Activated CD8-positive, alpha-beta T cell treated with anti-CD3 and anti-CD28 coated beads, Interleukin-2, amount 10 ng/mL, durations not matched to agents 7 days and 5 days (primary cell): ENCODE measurements at regions of chr15 and their contacts with region 1.

Region 1: GRCh38 chr15:90954712-90955671 is at the start of gene RCCD1:
- DNase-seq: peak; percentile 95
- ATAC-seq: peak; percentile 94
- H3K4me3 Mint-ChIP-seq: peak within 1 kb of the TSS; percentile 88
- H3K27ac Mint-ChIP-seq: peak within 1 kb of the TSS; percentile 97
- H3K4me1 Mint-ChIP-seq: peaks cover 22% of the 10 kb centered on the region
- H3K27me3 Mint-ChIP-seq: no peaks in the 10 kb centered on the region
- total RNA-seq, gene RCCD1: 30.1 to 31.9 TPM

Region 2: GRCh38 chr15:90915808-90916440 is 39.1 kb before region 1 on chr15:
- CTCF ChIA-PET with region 1: no interaction called
- POLR2A ChIA-PET with region 1: no interaction called
- DNase-seq: no peak
- ATAC-seq: no peak
- H3K4me3 Mint-ChIP-seq: no peak overlapping the region
- H3K27ac Mint-ChIP-seq: no peak overlapping the region
- H3K4me1 Mint-ChIP-seq: no peaks in the 10 kb centered on the region
- H3K27me3 Mint-ChIP-seq: no peaks in the 10 kb centered on the region

Region 3: GRCh38 chr15:90982135-90982534 is 27.1 kb after region 1 on chr15:
- CTCF ChIA-PET with region 1: interaction called, 17 read pairs
- POLR2A ChIA-PET with region 1: interaction called, 4 read pairs
- DNase-seq: no peak
- ATAC-seq: no peak
- H3K4me3 Mint-ChIP-seq: no peak overlapping the region
- H3K27ac Mint-ChIP-seq: peak overlapping the region; percentile 72
- H3K4me1 Mint-ChIP-seq: peaks cover 24% of the 10 kb centered on the region
- H3K27me3 Mint-ChIP-seq: no peaks in the 10 kb centered on the region

Region 4: GRCh38 chr15:91022075-91022835 is 67.3 kb after region 1 on chr15 and contains the start of gene VPS33B:
- CTCF ChIA-PET with region 1: interaction called, 17 read pairs
- POLR2A ChIA-PET with region 1: interaction called, 7 read pairs
- DNase-seq: peak; percentile 84
- ATAC-seq: peak; percentile 89
- H3K4me3 Mint-ChIP-seq: peak within 1 kb of the TSS; percentile 90
- H3K27ac Mint-ChIP-seq: peak within 1 kb of the TSS; percentile 87
- H3K4me1 Mint-ChIP-seq: peaks cover 43% of the 10 kb centered on the region
- H3K27me3 Mint-ChIP-seq: no peaks in the 10 kb centered on the region
- total RNA-seq, gene VPS33B: 16.6 to 21.2 TPM

Region 5: GRCh38 chr15:91049378-91050127 is 94.6 kb after region 1 on chr15:
- CTCF ChIA-PET with region 1: interaction called, 19 read pairs
- POLR2A ChIA-PET with region 1: interaction called, 3 read pairs
- DNase-seq: peak; percentile 79
- ATAC-seq: peak; percentile 90
- H3K4me3 Mint-ChIP-seq: no peak overlapping the region
- H3K27ac Mint-ChIP-seq: no peak overlapping the region
- H3K4me1 Mint-ChIP-seq: peaks cover 27% of the 10 kb centered on the region
- H3K27me3 Mint-ChIP-seq: peaks cover 35% of the 10 kb centered on the region

Region 6: DNA sequence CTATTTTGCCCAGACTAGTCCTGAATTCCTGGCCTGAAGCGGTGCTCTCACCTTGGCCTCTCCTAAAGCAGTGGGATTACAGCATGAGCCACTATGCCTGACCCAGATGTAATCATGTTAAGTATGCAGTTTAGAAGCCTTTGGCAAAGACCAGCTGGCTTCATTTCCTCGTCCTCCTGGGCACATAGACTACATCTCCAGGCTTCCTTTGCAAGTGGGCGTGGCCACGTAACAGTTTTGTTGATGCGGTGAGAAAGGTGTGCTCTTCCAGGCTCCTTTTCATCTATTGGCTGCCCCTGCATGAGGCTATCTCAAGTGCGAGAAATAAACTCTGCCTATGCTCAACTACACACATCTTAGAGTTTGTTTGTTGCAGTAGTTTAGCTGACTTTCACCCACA is 158.0 kb after region 1 on chr15:
- CTCF ChIA-PET with region 1: no interaction called
- POLR2A ChIA-PET with region 1: no interaction called
- DNase-seq: no peak
- ATAC-seq: no peak
- H3K4me3 Mint-ChIP-seq: no peak overlapping the region
- H3K27ac Mint-ChIP-seq: no peak overlapping the region
- H3K4me1 Mint-ChIP-seq: no peaks in the 10 kb centered on the region
- H3K27me3 Mint-ChIP-seq: peaks cover 19% of the 10 kb centered on the region